H1 (cell line): ENCODE measurements at regions of chr14 and their contacts with region 1.

Region 1: DNA sequence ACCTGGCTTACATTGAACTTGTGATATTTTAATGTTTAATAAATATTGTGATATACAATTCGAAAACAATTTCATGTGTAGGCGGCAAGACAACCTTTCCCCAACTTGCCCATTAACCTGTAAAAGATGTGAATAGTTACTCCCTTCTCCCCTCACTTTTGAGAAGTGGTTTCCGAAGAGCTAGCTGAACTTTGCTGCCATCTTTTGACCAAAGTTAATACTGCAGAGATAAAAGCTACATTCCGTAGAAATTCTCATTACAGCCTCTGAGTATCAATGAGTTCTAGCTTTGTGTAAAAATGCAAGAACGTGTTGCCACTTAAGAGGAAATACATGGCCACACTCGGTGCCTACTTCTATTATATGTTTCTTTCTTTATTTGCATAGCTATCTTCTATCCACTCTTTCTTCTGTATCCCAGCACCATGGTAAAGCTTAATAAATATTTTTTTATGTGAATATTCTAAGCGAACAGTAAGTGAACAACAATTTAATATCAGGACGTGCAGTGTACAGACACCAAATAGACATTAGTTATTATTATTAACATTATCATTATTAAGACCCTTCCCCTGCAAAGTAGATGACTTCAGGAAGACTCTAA is 105.1 kb upstream of the TMEM260 start:
- DNase-seq: no peak
- H3K4me3 ChIP-seq: no peak overlapping the region
- H3K27ac ChIP-seq: no peak overlapping the region
- H3K4me1 ChIP-seq: no peaks in the 10 kb centered on the region
- H3K27me3 ChIP-seq: no peaks in the 10 kb centered on the region; a peak in 1 of 7 replicates
- CTCF ChIP-seq: peak in 2 of 3 experiments; percentile 68 to 76; a peak in 2 of 4 replicates
- EP300 ChIP-seq: no peak
- POLR2A ChIP-seq: no peak
- RAD21 ChIP-seq: peak; percentile 96 to 97

Region 2: DNA sequence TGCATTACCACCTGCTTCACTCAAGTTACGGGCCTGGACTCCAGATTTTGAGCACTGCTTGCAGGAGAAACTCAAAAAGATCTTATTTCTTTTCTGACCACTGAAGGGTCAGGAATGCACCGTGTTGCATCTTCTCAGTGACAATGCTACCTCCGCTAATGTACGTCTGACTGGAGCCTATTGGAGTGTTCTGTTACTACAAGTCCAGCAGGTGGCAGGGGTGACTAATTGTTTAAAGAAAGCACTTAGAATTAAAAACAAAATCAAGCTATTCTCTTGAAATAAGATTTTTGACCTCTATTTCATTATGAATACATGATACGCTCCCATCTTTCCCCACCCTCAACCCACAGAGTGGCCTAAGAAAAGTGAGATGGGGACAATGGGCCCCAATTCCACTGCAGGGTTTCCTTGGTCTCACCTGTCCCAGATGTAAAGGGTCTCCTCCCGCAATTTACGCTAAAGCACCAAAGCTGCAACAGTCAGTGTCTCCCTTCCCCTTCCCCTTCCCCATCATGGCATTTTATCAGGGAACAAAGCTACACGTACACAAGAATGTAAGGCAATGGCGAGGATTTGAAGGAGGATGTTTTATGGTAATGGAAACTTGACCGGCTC is 1036.3 kb before region 1 on chr14:
- CTCF ChIA-PET with region 1: interaction called, 15 read pairs
- POLR2A ChIA-PET with region 1: no interaction called
- DNase-seq: no peak
- H3K4me3 ChIP-seq: no peak overlapping the region
- H3K27ac ChIP-seq: no peak overlapping the region
- H3K4me1 ChIP-seq: no peaks in the 10 kb centered on the region; a peak in 2 of 7 replicates
- H3K27me3 ChIP-seq: no peaks in the 10 kb centered on the region
- CTCF ChIP-seq: peak in 2 of 3 experiments; percentile 55 to 56; a peak in 3 of 4 replicates
- EP300 ChIP-seq: no peak
- POLR2A ChIP-seq: no peak
- RAD21 ChIP-seq: peak; percentile 68 to 79

Region 3: DNA sequence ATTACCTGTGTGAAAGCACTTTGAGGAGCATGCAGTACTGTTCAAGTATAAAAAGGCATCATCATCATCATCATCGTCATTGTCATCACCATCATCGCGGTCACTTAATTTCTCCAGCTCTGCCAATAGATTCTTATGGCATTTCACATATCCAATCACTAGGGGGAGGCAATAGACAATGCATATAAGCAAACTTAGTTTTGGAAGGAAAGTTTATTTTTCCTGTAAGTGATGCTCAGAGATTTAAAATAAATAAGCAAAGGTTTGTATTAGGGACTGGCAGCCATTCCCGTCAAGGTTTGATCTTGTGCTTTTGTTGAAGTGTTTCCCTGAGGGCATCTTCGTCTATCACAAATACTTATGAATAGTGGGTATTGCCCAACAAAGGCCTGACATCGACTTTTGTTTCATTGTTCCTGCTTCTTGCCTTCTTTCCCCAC is 767.1 kb before region 1 on chr14:
- CTCF ChIA-PET with region 1: interaction called, 16 read pairs
- POLR2A ChIA-PET with region 1: no interaction called
- DNase-seq: no peak
- H3K4me3 ChIP-seq: no peak overlapping the region
- H3K27ac ChIP-seq: no peak overlapping the region
- H3K4me1 ChIP-seq: no peaks in the 10 kb centered on the region
- H3K27me3 ChIP-seq: no peaks in the 10 kb centered on the region
- CTCF ChIP-seq: peak in 2 of 3 experiments; percentile 39 to 57; a peak in 2 of 4 replicates
- EP300 ChIP-seq: no peak
- POLR2A ChIP-seq: no peak
- RAD21 ChIP-seq: peak; percentile 77 to 80

Region 4: GRCh38 chr14:56351861-56352260 is 122.7 kb before region 1 on chr14:
- CTCF ChIA-PET with region 1: no interaction called
- POLR2A ChIA-PET with region 1: no interaction called
- DNase-seq: no peak
- H3K4me3 ChIP-seq: no peak overlapping the region
- H3K27ac ChIP-seq: no peak overlapping the region
- H3K4me1 ChIP-seq: no peaks in the 10 kb centered on the region
- H3K27me3 ChIP-seq: no peaks in the 10 kb centered on the region
- CTCF ChIP-seq: no peak
- EP300 ChIP-seq: no peak
- POLR2A ChIP-seq: no peak
- RAD21 ChIP-seq: no peak

Region 5: DNA sequence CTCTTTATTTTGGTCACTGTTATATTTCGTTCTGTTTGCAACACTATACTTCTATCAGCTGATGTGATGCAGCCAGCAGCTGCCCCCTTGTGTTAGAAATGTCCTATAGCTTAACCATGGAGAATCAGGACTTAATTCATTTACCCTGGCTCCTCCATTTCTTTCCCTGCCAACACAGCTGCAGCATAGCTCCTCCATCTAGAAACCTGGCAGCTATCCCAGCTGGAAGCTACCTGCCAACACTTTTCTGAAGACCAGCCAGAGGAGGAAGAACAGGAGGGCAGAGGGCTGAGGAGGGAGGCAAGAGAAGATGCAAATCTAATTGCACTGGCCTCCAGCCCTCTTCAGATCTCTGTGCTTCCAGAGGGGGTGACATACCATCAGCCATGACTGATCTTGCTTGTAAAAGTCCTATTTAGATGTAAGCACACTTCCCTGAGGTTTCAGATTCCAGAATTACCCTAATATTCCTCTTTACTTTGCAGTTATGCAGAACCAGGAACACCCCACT is 51.8 kb before region 1 on chr14:
- CTCF ChIA-PET with region 1: interaction called, 15 read pairs
- POLR2A ChIA-PET with region 1: no interaction called
- DNase-seq: no peak
- H3K4me3 ChIP-seq: no peak overlapping the region
- H3K27ac ChIP-seq: no peak overlapping the region
- H3K4me1 ChIP-seq: no peaks in the 10 kb centered on the region; a peak in 2 of 7 replicates
- H3K27me3 ChIP-seq: no peaks in the 10 kb centered on the region
- CTCF ChIP-seq: peak in 2 of 3 experiments; percentile 61 to 79; a peak in 3 of 4 replicates
- EP300 ChIP-seq: no peak
- POLR2A ChIP-seq: no peak
- RAD21 ChIP-seq: peak; percentile 79 to 82

Region 6: GRCh38 chr14:56501909-56502530 is 27.5 kb after region 1 on chr14:
- CTCF ChIA-PET with region 1: no interaction called
- POLR2A ChIA-PET with region 1: no interaction called
- DNase-seq: no peak
- H3K4me3 ChIP-seq: peak overlapping the region in 1 of 4 experiments; percentile 0; a peak in 1 of 8 replicates
- H3K27ac ChIP-seq: no peak overlapping the region
- H3K4me1 ChIP-seq: peaks cover 0 to 12% (median 6%) of the 10 kb centered on the region in 4 experiments; a peak in 2 of 7 replicates
- H3K27me3 ChIP-seq: no peaks in the 10 kb centered on the region
- CTCF ChIP-seq: no peak
- EP300 ChIP-seq: no peak
- POLR2A ChIP-seq: no peak
- RAD21 ChIP-seq: no peak

Region 7: GRCh38 chr14:56590535-56590960 is 116.0 kb after region 1 on chr14:
- CTCF ChIA-PET with region 1: no interaction called
- POLR2A ChIA-PET with region 1: no interaction called
- DNase-seq: no peak
- H3K4me3 ChIP-seq: no peak overlapping the region
- H3K27ac ChIP-seq: no peak overlapping the region
- H3K4me1 ChIP-seq: peaks cover 0 to 5% (median 0%) of the 10 kb centered on the region in 4 experiments; a peak in 1 of 7 replicates
- H3K27me3 ChIP-seq: no peaks in the 10 kb centered on the region
- CTCF ChIP-seq: peak in 1 of 3 experiments; percentile 27; a peak in 2 of 4 replicates
- EP300 ChIP-seq: no peak
- POLR2A ChIP-seq: no peak
- RAD21 ChIP-seq: peak in 1 of 2 experiments; percentile 34; a peak in 2 of 4 replicates

Region 8: DNA sequence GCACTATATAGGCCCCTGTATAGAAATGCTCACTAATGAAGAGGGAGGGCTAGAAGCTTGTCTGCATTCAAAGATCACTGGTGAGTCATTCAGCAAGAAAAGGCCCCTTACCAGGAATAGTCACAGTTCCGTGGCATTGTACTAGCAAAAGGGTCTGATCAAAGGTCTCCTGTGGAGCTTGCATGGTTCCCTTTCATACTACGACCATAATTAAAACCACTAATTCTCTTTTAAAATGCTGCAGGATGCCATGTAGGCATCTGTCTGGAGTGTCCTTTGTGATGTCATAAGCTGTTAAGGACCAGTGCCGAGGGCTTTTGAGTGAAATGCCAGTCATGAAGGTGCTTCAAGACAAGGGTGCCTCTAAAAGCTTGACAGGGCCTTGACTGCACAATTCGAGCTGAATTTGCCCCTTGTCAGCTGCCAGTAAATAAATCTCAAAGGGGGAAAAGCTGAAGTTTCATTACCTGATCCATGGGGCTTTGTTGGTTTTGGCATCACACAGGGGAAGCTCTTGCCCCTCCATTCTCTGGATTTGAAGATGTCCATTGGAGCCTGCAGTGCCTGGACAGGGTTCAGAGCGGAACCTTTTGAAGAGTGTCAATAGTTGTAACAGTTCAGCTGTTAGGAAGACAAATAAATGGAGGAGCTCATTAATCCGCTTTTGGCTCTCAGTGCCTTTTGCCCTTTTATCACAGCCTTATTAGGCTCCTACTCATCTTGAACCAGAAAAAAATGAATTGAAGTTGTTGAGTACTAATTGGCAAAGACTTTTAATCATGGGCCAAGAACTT is 174.2 kb after region 1 on chr14:
- CTCF ChIA-PET with region 1: no interaction called
- POLR2A ChIA-PET with region 1: no interaction called
- DNase-seq: no peak
- H3K4me3 ChIP-seq: no peak overlapping the region
- H3K27ac ChIP-seq: no peak overlapping the region
- H3K4me1 ChIP-seq: peaks cover 0 to 6% (median 0%) of the 10 kb centered on the region in 4 experiments; a peak in 1 of 7 replicates
- H3K27me3 ChIP-seq: no peaks in the 10 kb centered on the region
- CTCF ChIP-seq: no peak
- EP300 ChIP-seq: no peak
- POLR2A ChIP-seq: no peak
- RAD21 ChIP-seq: no peak